WTC11 (cell line): ENCODE measurements at regions of chr9 and their contacts with region 1.

Region 1: DNA sequence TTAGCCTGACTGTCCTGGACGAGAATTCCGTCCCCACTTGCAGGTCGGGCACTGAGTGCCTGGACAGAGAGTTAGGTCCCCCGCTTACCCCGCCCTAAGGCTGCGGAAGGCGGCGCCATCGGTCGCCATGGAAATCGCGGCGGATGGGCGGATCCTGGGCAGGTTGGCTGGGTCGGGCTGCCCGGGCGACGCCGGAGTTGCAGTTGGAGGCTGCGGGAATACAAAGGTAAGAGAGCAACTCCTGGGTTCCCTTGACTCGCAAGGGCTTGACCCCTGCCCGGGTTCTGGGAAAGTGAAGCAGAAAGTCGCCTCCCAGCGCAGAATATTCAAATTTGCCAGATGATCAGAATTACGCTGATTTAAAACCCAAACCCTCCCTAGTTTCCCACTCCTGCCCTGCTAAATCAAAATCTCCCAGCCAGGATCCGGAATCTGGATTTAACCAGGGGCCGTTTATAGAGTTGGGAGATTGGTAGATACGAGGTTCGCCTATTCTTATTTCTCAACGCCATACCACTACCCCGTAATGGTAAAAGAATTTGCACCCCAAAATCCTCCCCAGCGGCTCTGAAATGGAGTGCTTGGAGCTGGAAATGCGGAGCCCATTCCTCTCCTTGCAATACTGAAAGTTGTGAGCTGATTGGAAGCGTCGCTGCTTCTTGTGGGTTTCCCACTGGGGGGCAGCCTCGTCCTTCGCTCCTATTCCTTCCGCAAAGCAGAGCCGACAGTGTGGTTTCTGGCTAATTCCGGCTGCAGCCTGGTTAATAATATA is 156.4 kb upstream of the RASEF start:
- DNase-seq: peak; percentile 87
- ATAC-seq: peak; percentile 94
- H3K4me3 Mint-ChIP-seq: peak overlapping the region; percentile 91
- H3K27ac Mint-ChIP-seq: peak overlapping the region; percentile 48; the same call in 1 of the 2 replicates
- H3K4me1 Mint-ChIP-seq: peaks cover 12% of the 10 kb centered on the region
- H3K27me3 Mint-ChIP-seq: no peaks in the 10 kb centered on the region; the same call in none of the 2 replicates
- CTCF ChIP-seq: peak; percentile 46

Region 2: DNA sequence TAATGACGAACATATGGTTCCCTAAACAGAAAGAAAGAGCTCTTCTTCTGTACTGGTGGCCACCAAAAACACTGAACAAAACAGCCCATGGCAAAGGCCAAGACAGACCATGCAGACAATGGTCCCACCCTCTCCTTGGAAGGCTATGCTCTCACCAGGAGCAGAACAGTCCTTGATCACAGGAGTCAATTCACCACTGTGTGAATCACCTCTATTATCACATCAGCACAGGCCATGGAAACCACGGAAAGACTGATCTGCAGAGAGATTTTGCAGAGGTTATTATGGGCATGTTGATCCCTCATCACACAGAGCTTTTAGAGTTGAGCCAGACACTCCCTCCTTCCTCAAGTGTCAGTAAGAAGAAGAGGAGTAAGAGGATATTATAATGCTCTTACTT is 22.4 kb before region 1 on chr9:
- CTCF ChIA-PET with region 1: interaction called, 14 read pairs
- POLR2A ChIA-PET with region 1: no interaction called
- DNase-seq: no peak
- ATAC-seq: no peak
- H3K4me3 Mint-ChIP-seq: no peak overlapping the region
- H3K27ac Mint-ChIP-seq: no peak overlapping the region
- H3K4me1 Mint-ChIP-seq: peaks cover 23% of the 10 kb centered on the region
- H3K27me3 Mint-ChIP-seq: no peaks in the 10 kb centered on the region
- CTCF ChIP-seq: no peak

Region 3: DNA sequence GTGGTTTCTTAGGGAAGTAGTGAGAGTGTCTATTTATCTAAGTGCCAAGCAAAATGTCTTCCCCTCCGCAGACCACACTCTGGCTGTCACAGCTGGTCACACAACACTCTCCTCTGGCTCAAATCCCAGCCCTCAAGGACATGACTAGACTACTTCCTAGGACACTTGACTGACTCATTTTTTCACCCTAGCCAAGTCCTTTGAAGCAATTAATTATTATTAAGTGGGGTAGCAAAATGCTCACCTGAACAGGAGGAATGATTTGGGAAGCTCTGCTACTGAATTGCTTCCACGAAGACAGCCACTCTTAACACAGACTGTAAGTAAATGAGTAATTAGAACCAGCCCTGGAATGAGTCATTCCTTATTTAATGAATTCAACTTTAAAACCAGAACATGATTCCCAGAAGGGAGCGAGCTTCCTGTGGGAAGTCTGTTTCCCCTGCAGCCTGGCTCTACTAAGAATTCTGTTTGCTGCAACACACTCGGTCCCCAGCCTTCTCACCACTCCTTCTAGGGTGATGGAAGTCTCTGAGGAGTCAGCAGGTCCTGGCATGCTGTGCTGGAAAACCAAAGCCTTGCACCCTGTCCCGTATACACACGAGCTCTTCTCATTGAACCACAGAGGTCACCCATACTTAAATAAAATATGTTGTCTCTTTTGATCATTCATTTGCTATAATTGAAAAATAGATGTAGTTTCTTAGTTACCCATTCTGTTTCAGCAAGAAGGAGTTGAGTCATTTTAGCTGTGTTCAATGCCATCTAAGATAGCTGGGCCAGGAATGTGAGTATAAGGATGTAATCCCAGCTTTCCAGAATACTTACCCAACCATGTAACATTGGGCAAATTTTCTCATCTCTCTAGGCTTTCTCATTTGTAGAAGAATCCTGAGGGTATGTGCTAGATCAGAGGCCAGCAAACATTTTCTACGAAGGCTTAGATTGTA is 62.2 kb after region 1 on chr9:
- CTCF ChIA-PET with region 1: interaction called, 15 read pairs
- POLR2A ChIA-PET with region 1: no interaction called
- DNase-seq: no peak
- ATAC-seq: no peak
- H3K4me3 Mint-ChIP-seq: no peak overlapping the region
- H3K27ac Mint-ChIP-seq: no peak overlapping the region; the same call in 1 of the 2 replicates
- H3K4me1 Mint-ChIP-seq: peaks cover 22% of the 10 kb centered on the region
- H3K27me3 Mint-ChIP-seq: no peaks in the 10 kb centered on the region
- CTCF ChIP-seq: no peak

Region 4: GRCh38 chr9:83334320-83334719 is 115.0 kb after region 1 on chr9:
- CTCF ChIA-PET with region 1: interaction called, 51 read pairs
- POLR2A ChIA-PET with region 1: no interaction called
- DNase-seq: peak; percentile 85
- ATAC-seq: peak; percentile 82
- H3K4me3 Mint-ChIP-seq: no peak overlapping the region
- H3K27ac Mint-ChIP-seq: no peak overlapping the region
- H3K4me1 Mint-ChIP-seq: no peaks in the 10 kb centered on the region
- H3K27me3 Mint-ChIP-seq: no peaks in the 10 kb centered on the region
- CTCF ChIP-seq: peak; percentile 95

Region 5: DNA sequence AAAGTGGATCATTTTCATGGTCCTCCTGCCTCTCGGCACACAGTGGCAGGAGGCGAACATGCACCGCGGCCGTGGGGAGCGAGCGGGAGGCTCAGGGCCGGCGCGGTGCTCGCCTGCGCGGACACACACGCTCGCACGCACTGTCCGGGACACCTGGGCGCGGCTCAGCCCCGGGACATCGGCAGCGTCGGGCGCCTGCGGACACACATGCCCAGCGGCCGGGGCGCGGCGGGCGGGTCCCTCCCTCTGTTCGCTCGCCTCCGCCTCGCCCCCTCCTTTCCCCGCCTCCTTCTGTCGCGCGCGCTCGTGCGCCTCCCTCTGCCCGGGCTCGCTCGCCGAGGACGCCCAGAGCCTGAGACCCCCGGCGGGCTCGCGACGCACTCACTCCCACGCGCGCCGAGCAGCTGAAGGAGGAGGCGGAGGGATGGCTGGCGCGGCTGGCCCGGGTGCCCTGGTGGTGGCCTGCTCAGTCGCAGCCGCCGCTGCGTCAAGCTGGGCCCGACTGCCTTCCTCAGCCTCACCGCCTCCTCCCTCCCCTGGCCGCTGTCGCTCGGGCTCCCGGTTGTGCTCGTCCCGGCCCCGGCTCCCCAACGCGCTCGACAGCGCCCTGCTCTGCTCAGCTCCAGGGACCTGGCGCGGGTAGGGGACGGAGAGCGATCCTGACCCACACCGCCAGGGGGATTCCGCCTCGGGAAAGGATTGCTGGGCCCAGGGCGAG is 319.0 kb after region 1 on chr9 and contains the start of gene FRMD3:
- CTCF ChIA-PET with region 1: interaction called, 61 read pairs
- POLR2A ChIA-PET with region 1: interaction called, 4 read pairs
- DNase-seq: peak; percentile 83
- ATAC-seq: peak; percentile 94
- H3K4me3 Mint-ChIP-seq: peak within 1 kb of the TSS; percentile 76
- H3K27ac Mint-ChIP-seq: no peak within 1 kb of the TSS
- H3K4me1 Mint-ChIP-seq: peaks cover 20% of the 10 kb centered on the region
- H3K27me3 Mint-ChIP-seq: peaks cover 64% of the 10 kb centered on the region
- CTCF ChIP-seq: peak; percentile 44
- total RNA-seq, gene FRMD3: 0.89 to 1.4 TPM (median 1.0 TPM) in 3 replicates

Region 6: GRCh38 chr9:83596896-83597504 is 377.7 kb after region 1 on chr9:
- CTCF ChIA-PET with region 1: interaction called, 12 read pairs
- POLR2A ChIA-PET with region 1: no interaction called
- DNase-seq: peak; percentile 80
- ATAC-seq: peak; percentile 96
- H3K4me3 Mint-ChIP-seq: no peak overlapping the region
- H3K27ac Mint-ChIP-seq: no peak overlapping the region
- H3K4me1 Mint-ChIP-seq: no peaks in the 10 kb centered on the region
- H3K27me3 Mint-ChIP-seq: no peaks in the 10 kb centered on the region
- CTCF ChIP-seq: peak; percentile 89

Region 7: DNA sequence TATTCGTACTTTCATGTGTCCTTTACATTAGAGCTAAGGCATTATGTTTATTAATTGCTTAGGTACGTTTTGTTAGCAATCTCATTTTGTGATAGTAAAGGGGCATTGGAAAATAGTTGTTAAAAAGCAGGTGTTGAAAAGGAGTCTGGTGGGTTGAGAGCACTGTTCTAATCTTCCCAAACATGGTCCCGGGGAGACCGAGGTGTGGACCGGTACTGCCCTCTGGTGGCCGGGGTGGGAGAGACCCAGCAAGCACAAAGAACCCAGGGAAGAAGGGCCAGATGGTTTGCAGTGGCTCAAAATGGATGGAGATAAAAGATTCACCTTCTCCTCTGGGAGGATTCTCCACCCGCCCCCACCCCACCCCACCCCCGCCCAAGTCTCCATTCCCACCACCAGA is 429.7 kb after region 1 on chr9:
- CTCF ChIA-PET with region 1: interaction called, 28 read pairs
- POLR2A ChIA-PET with region 1: no interaction called
- DNase-seq: peak; percentile 84
- ATAC-seq: peak; percentile 91
- H3K4me3 Mint-ChIP-seq: no peak overlapping the region
- H3K27ac Mint-ChIP-seq: no peak overlapping the region
- H3K4me1 Mint-ChIP-seq: peaks cover 14% of the 10 kb centered on the region
- H3K27me3 Mint-ChIP-seq: no peaks in the 10 kb centered on the region
- CTCF ChIP-seq: peak; percentile 88